ENCODE measurements at regions of chrX and their contacts with region 1.

Region 1: GRCh38 chrX:107716816-107717700 is 58.5 kb downstream of the TSC22D3 start:
- DNase-seq: peak; percentile 63
- ATAC-seq: peak; percentile 58
- H3K4me3 ChIP-seq: peak overlapping the region; percentile 43
- H3K27ac ChIP-seq: peak overlapping the region; percentile 72
- H3K4me1 ChIP-seq: peaks cover 6% of the 10 kb centered on the region; the same call in 1 of the 2 replicates
- H3K27me3 ChIP-seq: peaks cover 16% of the 10 kb centered on the region
- CTCF ChIP-seq: no peak
- POLR2A ChIP-seq: peak; percentile 95
- RAD21 ChIP-seq: 0 out of 2 replicates have a peak, but pooled peaks have one; percentile 10

Region 2: DNA sequence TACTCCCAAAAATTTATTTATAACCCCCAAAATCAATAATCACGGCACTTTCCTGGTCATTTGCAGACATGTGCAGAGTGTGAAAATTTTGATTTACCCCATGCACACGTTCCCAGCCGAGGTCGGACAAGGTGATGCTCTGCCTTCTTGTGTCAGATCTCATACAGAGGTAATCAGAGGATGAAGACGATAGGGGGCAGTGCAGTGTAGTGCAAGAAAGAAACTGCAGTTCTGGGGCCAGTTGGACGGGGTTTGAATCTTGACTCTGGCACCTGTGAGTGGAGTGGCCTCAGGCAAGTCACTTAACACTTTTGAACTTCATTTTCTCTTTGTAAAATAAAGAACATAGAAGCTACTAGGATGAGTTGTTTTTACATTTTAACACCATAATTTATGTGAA is 179.2 kb before region 1 on chrX:
- CTCF ChIA-PET with region 1: interaction called, 6 read pairs
- POLR2A ChIA-PET with region 1: no interaction called
- dilution Hi-C with region 1: no loop called
- in situ Hi-C with region 1: no loop called
- intact Hi-C with region 1: loop called (anchors 1 kb)
- DNase-seq: peak; percentile 50
- ATAC-seq: peak; percentile 63
- H3K4me3 ChIP-seq: no peak overlapping the region
- H3K27ac ChIP-seq: no peak overlapping the region
- H3K4me1 ChIP-seq: no peaks in the 10 kb centered on the region
- H3K27me3 ChIP-seq: peaks cover 7% of the 10 kb centered on the region
- CTCF ChIP-seq: peak; percentile 59
- POLR2A ChIP-seq: no peak
- RAD21 ChIP-seq: peak; percentile 76

Region 3: DNA sequence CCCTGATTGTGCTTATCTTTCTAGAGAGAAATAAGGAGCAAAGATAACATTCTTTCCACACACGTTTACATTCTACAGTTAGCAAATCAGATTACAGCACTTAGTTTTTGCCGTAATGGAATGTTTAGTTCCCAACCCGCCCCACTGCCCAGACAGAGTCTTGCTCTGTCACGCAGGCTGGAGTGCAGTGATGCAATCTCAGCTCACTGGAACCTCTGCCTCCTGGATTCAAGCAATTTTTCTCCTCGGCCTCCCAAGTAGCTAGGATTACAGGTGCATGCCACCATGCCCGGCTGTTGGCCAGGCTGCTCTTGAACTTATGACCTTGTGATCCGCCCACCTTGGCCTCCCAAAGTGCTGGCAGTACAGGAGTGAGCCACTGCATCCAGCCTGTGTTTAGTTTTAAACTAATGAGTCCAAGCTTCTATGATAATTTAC is 97.2 kb before region 1 on chrX:
- CTCF ChIA-PET with region 1: no interaction called
- POLR2A ChIA-PET with region 1: no interaction called
- dilution Hi-C with region 1: no loop called
- in situ Hi-C with region 1: no loop called
- intact Hi-C with region 1: no loop called
- DNase-seq: peak; percentile 49
- ATAC-seq: peak; percentile 83
- H3K4me3 ChIP-seq: no peak overlapping the region
- H3K27ac ChIP-seq: no peak overlapping the region
- H3K4me1 ChIP-seq: no peaks in the 10 kb centered on the region
- H3K27me3 ChIP-seq: no peaks in the 10 kb centered on the region; the same call in 1 of the 2 replicates
- CTCF ChIP-seq: no peak
- POLR2A ChIP-seq: no peak
- RAD21 ChIP-seq: no peak

Region 4: DNA sequence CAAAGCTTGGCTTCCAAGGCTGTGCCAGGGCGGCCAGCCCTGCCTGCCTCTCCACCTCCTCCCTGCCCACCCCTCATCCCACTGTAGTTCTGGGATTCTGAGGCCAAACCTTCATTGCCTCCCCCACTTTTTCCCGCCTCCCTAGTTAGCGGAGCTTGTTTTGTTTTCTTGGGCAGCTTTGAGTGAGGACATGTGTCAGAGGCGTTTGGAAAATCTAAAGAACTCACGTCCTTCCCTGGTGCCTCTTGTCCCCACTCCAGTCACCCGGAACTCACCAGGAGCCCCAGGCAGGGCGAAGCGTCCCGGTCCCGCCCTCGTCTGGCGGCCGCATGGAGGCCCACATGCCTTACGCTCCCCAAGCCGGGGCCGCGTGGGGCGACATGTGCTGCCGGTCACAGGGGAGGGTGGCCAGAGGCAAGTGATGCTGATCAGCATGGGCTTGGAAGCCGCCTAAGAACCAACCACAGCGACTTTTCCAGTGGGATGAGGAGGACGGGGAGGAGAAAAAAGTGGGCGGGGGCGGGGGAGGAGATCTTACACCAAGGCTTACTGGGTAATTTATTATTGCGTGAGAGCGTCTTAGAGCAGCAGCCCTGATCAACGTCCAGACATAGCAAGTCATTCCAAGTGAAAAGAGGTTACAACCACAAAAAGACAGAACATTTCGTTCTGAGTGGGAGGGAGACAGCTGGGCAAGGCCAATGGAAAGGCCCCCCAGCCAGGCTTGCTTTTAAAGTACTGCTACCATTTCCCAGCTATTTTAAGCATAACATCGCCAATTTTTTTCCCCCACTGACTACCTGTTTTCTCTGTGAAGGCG is 40.3 kb before region 1 on chrX:
- CTCF ChIA-PET with region 1: interaction called, 8 read pairs
- POLR2A ChIA-PET with region 1: interaction called, 3 read pairs
- dilution Hi-C with region 1: no loop called
- in situ Hi-C with region 1: loop called (anchors 5 kb)
- intact Hi-C with region 1: loop called (anchors 2 kb)
- DNase-seq: peak; percentile 84
- ATAC-seq: peak; percentile 77
- H3K4me3 ChIP-seq: peak overlapping the region; percentile 42
- H3K27ac ChIP-seq: peak overlapping the region; percentile 23; the same call in 1 of the 2 replicates
- H3K4me1 ChIP-seq: 0 out of 2 replicates have a peak, but pooled peaks cover 1% of the 10 kb centered on the region
- H3K27me3 ChIP-seq: peaks cover 19% of the 10 kb centered on the region
- CTCF ChIP-seq: no peak
- POLR2A ChIP-seq: 0 out of 2 replicates have a peak, but pooled peaks have one; percentile 17
- RAD21 ChIP-seq: no peak

Region 5: DNA sequence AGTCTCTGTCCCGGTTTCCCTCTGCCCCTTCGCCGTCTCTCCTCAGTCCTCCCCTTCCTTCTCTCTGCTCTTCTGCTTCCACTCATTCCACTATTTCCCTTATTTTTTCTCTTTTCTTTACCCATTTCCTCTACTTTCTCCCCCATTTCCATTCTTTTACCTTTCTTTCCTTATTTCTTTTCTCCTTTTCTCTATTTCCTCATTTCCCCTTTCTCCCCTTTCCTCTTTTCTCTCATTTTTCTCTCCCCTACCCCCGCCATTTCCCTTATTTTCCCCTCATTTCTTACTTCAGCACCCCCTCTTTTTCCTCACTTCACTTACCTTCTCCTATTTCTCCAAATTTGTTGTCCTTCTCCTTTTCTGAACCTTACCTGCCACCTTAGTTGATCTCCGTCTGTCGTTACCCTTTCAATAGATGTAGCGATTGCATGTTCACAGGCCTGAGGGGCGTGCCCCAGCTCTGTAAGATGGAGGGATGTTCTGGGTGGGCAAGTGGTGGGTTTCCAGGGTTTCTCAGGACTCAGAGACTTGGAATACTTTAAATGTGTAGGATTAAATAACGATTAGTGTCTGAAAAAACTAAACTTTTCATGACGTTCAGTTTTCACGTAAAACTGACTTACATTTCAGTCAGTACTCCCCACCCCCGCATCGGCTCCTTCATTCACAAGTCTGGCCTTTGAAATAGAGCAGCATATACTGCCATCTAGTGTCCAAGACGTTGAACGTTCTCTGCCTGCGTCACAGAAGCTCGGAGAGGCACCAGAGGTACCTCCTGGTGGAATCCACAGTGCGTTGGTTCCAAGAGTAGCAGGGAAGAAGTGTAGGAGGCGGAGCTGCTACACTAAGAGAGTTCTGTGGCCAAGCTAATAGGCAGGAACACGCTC is 59.8 kb after region 1 on chrX:
- CTCF ChIA-PET with region 1: interaction called, 3 read pairs
- POLR2A ChIA-PET with region 1: no interaction called
- dilution Hi-C with region 1: no loop called
- in situ Hi-C with region 1: no loop called
- intact Hi-C with region 1: loop called (anchors 1 kb)
- DNase-seq: peak; percentile 87
- ATAC-seq: peak; percentile 88
- H3K4me3 ChIP-seq: peak overlapping the region; percentile 14; the same call in 1 of the 2 replicates
- H3K27ac ChIP-seq: no peak overlapping the region
- H3K4me1 ChIP-seq: no peaks in the 10 kb centered on the region
- H3K27me3 ChIP-seq: peaks cover 31% of the 10 kb centered on the region
- CTCF ChIP-seq: peak; percentile 80
- POLR2A ChIP-seq: no peak
- RAD21 ChIP-seq: peak; percentile 82

Measured in IMR-90 (cell line).